IMR-90 (cell line): ENCODE measurements at regions of chr1 and their contacts with region 1.

Region 1: GRCh38 chr1:192700834-192701271 is 64.9 kb downstream of the RGS13 start:
- DNase-seq: peak; percentile 95
- ATAC-seq: peak; percentile 96
- H3K4me3 ChIP-seq: no peak overlapping the region
- H3K27ac ChIP-seq: peak overlapping the region; percentile 66; the same call in 1 of the 2 replicates
- H3K4me1 ChIP-seq: peaks cover 8% of the 10 kb centered on the region
- H3K27me3 ChIP-seq: no peaks in the 10 kb centered on the region
- CTCF ChIP-seq: no peak
- POLR2A ChIP-seq: no peak
- RAD21 ChIP-seq: no peak

Region 2: DNA sequence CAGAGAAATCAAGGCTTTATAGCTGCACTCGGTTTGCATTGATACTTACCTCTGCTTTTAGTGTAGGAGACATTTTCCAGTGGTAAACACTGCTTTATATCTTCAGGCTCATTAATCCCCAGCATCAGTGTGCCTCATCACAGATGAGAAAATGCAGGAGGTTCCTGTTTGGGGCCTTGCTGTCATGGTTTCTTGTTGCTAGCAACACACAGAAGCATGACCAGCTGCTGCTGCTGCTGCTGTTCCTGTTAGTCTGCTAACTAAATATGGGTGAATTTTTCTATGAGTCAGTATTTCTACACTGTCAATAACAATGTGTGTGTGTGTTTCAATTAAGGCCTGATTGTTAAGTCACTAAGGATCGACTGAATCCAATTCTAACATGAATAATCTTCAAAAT is 211.1 kb before region 1 on chr1:
- CTCF ChIA-PET with region 1: no interaction called
- POLR2A ChIA-PET with region 1: no interaction called
- dilution Hi-C with region 1: no loop called
- in situ Hi-C with region 1: no loop called
- intact Hi-C with region 1: loop called (anchors 5 kb)
- DNase-seq: peak; percentile 95
- ATAC-seq: peak; percentile 81
- H3K4me3 ChIP-seq: no peak overlapping the region
- H3K27ac ChIP-seq: no peak overlapping the region
- H3K4me1 ChIP-seq: 0 out of 2 replicates have a peak, but pooled peaks cover 2% of the 10 kb centered on the region
- H3K27me3 ChIP-seq: no peaks in the 10 kb centered on the region
- CTCF ChIP-seq: no peak
- POLR2A ChIP-seq: no peak
- RAD21 ChIP-seq: no peak

Region 3: GRCh38 chr1:192766009-192766625 is 65.3 kb after region 1 on chr1:
- CTCF ChIA-PET with region 1: no interaction called
- POLR2A ChIA-PET with region 1: interaction called, 5 read pairs
- dilution Hi-C with region 1: no loop called
- in situ Hi-C with region 1: no loop called
- intact Hi-C with region 1: loop called (anchors 1 kb)
- DNase-seq: peak; percentile 37
- ATAC-seq: peak; percentile 54
- H3K4me3 ChIP-seq: no peak overlapping the region
- H3K27ac ChIP-seq: peak overlapping the region; percentile 44; the same call in 1 of the 2 replicates
- H3K4me1 ChIP-seq: peaks cover 18% of the 10 kb centered on the region
- H3K27me3 ChIP-seq: no peaks in the 10 kb centered on the region
- CTCF ChIP-seq: no peak
- POLR2A ChIP-seq: no peak
- RAD21 ChIP-seq: no peak

Region 4: DNA sequence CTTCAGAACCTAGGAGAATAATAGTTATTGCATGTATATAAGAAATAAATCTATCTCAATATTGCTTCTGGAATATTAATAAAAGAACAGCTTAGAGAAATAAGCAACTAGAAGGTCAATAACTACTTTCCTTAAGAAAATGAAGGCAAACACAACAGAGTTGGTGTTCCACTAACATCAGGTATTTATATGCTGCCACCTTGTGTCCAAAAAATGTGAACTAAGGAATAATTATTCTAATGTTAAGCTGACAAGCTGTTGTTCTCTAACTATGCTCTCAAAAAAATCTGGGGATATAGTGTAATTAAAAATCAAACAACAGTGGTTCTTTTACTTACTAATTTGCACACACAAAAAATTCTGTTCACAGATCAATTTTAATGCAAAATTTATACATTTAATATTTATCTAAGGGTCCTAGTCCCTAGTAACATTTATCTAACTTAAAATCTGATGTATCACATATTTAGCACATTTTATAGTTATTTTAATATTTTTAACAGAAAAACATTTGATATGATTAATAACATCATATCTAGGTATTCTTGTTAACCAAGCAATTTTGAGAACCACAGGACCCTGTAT is 318.7 kb after region 1 on chr1:
- CTCF ChIA-PET with region 1: no interaction called
- POLR2A ChIA-PET with region 1: no interaction called
- dilution Hi-C with region 1: no loop called
- in situ Hi-C with region 1: no loop called
- intact Hi-C with region 1: loop called (anchors 5 kb)
- DNase-seq: peak; percentile 64
- ATAC-seq: peak; percentile 66
- H3K4me3 ChIP-seq: no peak overlapping the region
- H3K27ac ChIP-seq: no peak overlapping the region
- H3K4me1 ChIP-seq: no peaks in the 10 kb centered on the region
- H3K27me3 ChIP-seq: no peaks in the 10 kb centered on the region
- CTCF ChIP-seq: peak; percentile 59
- POLR2A ChIP-seq: no peak
- RAD21 ChIP-seq: peak; percentile 74